ENCODE measurements at regions of chr9 and their contacts with region 1.

Region 1: GRCh38 chr9:79571309-79572031 is at the start of gene TLE4:
- DNase-seq: peak; percentile 100
- total RNA-seq, gene TLE4: 17.4 TPM

Region 2: GRCh38 chr9:79623799-79624721 is 52.6 kb after region 1 on chr9:
- intact Hi-C with region 1: loop called (anchors 5 kb)
- DNase-seq: peak; percentile 77

Region 3: DNA sequence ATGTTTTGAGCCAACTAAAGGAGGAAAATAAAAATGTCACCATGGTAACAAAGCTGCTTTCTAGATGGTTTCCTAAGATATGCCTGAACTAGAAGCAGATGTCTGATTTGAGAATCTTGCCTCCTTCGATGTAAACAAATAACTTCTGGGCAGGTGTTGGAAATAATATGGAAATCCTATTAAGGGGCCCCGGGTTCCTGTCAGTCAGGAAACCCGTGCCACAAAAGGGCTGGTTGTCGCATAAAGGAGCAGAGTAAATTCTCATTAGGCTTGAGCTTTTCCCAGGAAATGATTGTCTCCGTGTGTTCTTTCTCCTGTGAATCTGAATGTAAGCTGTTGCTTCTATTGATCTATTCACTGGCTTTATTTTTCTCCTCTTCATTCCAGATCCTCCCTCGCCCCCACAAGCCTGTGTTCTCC is 91.1 kb after region 1 on chr9:
- intact Hi-C with region 1: loop called (anchors 5 kb)
- DNase-seq: no peak

Region 4: DNA sequence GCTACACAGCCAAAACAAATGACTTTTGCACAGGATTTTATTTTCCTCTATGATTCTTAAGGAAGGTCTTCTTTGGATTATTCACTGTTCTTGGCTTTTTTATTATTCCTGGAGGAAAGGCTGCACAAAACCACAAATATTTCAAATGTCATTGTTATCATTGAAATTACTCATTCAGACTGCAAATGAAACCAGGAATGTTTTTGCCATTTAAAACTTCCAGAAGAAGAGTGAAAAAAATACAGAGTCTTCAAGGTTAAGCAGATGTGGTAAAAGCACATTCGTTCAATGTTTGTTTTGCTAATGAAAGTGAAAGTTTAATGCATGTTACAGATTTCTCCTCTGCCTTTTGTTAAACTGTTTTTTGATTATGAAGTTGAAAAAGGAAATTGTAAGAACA is 238.5 kb after region 1 on chr9:
- intact Hi-C with region 1: loop called (anchors 10 kb)
- DNase-seq: no peak